HEK293T (cell line): ENCODE measurements at regions of chr12 and their contacts with region 1.

Region 1: DNA sequence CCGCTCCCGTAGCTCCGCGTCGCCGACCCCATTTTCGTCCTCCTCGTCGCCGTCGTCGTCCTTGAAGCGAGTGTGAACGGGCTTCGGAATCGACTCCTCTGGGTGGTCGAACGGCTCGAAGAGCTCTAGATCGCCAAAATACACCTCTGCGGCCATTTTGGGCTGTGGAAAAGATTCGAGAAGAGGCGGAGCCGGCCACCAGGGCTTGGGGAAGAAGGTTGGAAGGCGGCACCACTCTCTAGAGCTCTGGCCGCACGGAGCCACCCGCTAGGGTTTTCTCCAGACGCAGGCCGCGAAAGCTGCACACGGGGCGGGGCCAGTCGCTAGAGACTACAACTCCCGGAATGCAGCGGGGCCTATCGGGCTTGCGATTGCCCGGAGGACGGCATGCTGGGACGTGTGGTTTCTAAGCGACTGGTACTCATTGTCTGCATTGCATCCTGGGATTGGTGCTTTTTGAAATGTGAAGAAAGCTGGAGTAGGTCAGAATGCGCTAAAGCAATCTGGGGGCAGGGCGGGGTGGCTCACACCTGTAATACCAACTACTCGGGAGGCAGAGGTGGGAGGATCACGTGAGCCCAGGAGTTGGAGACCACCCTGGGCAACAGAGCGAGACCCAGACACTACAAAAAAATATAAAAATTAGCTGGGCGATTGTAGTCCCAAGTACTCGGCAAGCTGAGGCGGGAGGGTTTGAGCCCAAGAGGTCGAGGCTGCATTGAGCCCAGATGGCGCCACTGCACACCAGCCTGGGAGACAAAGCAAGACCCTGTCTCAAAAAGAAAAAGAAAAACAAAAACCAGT is at the start of gene ZCCHC8:
- DNase-seq: peak; percentile 88

Region 2: DNA sequence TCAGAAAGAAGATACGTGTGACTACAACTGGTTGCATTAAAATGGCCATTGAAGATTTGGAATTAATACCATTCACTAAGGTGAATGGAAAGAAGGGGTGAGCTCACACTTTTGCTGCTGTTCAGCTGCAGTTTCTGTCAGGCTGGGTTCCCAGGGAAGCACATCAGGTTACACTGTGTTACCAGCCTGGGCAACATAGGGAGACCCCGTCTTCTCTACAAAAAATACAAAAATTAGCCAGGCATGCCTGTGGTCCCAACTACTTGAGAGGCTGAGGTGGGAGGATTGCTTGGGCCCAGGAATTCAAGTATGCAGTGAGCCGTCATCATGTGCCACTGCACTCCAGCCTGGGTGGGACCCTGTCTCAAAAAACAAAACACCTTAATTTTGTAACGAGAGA is 12.8 kb after region 1 on chr12:
- CTCF ChIA-PET with region 1: interaction called, 3 read pairs
- POLR2A ChIA-PET with region 1: interaction called, 16 read pairs
- DNase-seq: no peak

Region 3: DNA sequence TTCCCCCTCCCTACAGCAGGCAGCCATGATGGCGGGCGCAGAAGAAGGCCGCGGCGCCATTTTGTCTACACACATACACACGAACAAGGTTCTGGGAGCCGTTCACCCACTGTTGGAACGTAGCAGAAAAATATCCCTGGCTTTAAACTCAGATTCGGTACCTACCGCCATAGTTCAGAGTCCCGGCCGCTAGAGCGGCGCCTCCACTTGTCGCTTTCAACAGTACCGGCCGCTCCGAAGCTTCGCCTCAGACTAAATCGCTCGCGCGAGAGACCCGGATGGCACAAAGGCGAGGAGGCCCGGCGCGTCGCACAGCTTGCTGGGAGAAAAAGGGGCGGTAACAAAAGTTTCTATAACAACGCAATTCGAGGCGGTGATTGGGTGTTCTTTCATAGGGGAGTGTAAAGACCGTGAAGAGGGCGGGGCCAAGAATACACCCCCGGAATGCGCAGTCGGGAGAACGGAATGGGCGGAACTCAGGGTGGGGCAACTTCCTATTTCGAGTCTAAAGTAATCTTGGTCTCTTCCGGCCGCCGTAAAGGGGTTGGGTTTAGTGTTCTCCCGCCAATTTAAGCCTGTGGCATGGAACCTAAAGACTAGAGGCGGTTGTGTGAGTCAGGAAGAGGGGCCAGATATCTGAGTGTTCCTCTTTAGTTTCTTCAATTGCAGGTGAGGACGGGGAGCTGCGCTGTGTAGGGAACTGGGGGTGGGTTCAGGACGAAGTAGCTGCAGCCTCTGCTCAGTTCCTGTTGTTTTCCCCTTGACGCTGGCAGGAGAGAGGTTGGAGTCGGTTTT is 26.0 kb after region 1 on chr12 and contains the starts of genes KNTC1 and RSRC2:
- CTCF ChIA-PET with region 1: no interaction called
- POLR2A ChIA-PET with region 1: interaction called, 44 read pairs
- DNase-seq: peak; percentile 97

Region 4: DNA sequence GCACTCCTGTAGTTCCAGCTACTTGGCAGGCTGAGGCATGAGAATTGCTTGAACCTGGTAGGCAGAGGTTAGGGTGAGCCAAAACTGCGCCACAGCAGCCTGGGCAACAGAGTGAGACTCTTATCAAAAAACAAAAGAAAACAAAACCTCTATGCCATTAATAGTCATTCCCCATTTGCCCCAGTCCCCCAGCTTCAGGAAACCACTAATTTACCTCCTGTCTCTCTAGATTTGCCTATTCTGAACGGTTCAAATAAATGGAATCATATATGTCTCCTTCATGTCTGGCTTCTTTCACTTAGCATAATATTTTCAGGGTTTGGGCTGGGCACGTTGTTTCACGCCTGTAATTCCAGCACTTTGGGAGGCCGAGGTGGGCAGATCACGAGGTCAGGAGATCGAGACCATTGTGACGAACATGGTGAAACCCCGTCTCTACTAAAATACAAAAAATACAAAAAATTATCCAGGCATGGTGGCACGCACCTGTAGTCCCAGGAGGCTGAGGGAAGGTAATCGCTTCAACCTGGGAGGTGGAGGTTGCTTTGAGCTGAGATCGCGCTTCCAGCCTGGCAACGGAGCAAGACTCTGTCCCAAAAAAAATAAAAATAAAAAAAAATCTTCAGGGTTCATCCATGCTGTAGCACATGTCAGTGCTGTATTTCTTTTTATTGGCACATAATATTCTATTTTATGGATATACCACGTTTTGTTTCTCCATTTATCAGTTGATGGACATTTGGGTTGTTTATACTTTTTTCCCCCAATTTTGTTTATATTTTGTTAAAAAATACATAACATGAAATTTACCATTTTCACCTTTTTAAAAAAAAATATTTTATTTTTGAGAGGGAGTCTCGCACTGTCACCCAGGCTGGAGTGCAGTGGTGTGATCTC is 58.1 kb after region 1 on chr12:
- CTCF ChIA-PET with region 1: no interaction called
- POLR2A ChIA-PET with region 1: no interaction called
- DNase-seq: no peak